Activated CD8-positive, alpha-beta T cell treated with anti-CD3 and anti-CD28 coated beads, Interleukin-2, amount 10 ng/mL, durations not matched to agents 7 days and 5 days (primary cell): ENCODE measurements at regions of chr7 and their contacts with region 1.

Region 1: GRCh38 chr7:43639858-43640491 is 57.1 kb downstream of the STK17A start:
- DNase-seq: no peak
- ATAC-seq: no peak
- H3K4me3 Mint-ChIP-seq: no peak overlapping the region
- H3K27ac Mint-ChIP-seq: peak overlapping the region; percentile 48
- H3K4me1 Mint-ChIP-seq: peaks cover 79% of the 10 kb centered on the region
- H3K27me3 Mint-ChIP-seq: no peaks in the 10 kb centered on the region

Region 2: GRCh38 chr7:43625453-43625852 is 14.5 kb before region 1 on chr7:
- CTCF ChIA-PET with region 1: interaction called, 11 read pairs
- POLR2A ChIA-PET with region 1: interaction called, 3 read pairs
- DNase-seq: peak; percentile 75
- ATAC-seq: peak; percentile 81
- H3K4me3 Mint-ChIP-seq: peak overlapping the region; percentile 22
- H3K27ac Mint-ChIP-seq: peak overlapping the region; percentile 73
- H3K4me1 Mint-ChIP-seq: peaks cover 84% of the 10 kb centered on the region
- H3K27me3 Mint-ChIP-seq: no peaks in the 10 kb centered on the region

Region 3: DNA sequence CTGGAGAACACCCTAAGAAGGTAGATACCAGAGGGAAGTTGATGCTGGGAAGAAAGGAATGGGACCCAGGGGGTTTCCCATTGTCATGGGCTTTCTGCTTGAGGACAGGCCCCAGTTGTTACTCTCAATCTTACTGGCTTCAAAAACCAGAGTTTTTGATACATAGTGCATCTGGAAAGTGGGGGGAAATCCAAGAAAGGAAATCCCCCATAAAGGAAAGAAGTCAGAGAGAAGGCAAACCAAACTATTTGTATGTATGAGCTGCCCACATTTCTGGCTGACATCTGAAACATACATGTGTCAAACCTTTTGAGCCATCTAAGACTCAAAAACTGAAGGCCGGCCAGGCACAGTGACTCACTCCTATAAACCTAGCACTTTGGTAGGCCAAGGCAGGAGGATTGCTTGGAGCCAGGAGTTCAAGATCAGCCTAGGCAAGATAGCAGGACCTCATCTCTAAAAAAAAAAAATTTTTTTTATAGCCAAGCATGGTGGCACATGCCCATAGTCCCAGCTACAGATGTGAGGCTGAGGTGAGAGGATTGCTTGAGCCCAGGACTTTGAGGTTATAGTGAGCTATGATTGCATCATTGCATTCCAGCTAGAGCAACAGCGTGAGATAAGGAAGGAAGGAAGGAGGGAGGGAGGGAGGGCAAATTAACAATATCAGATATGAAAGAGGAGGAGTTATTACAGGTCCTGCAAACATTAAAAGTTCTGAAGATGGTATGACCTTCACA is 96.0 kb after region 1 on chr7:
- CTCF ChIA-PET with region 1: no interaction called
- POLR2A ChIA-PET with region 1: no interaction called
- DNase-seq: no peak
- ATAC-seq: no peak
- H3K4me3 Mint-ChIP-seq: no peak overlapping the region
- H3K27ac Mint-ChIP-seq: no peak overlapping the region
- H3K4me1 Mint-ChIP-seq: peaks cover 1% of the 10 kb centered on the region
- H3K27me3 Mint-ChIP-seq: peaks cover 3% of the 10 kb centered on the region

Region 4: GRCh38 chr7:43764039-43764761 is 124.2 kb after region 1 on chr7:
- CTCF ChIA-PET with region 1: no interaction called
- POLR2A ChIA-PET with region 1: no interaction called
- DNase-seq: no peak
- ATAC-seq: peak; percentile 52
- H3K4me3 Mint-ChIP-seq: no peak overlapping the region
- H3K27ac Mint-ChIP-seq: no peak overlapping the region
- H3K4me1 Mint-ChIP-seq: peaks cover 27% of the 10 kb centered on the region
- H3K27me3 Mint-ChIP-seq: no peaks in the 10 kb centered on the region